Activated naive CD4-positive, alpha-beta T cell treated with anti-CD3 and anti-CD28 coated beads, Interleukin-2, amount 10 ng/mL, durations not matched to agents 7 days and 5 days (primary cell): ENCODE measurements at regions of chr1 and their contacts with region 1.

Region 1: GRCh38 chr1:169586395-169587255 is at the start of gene F5:
- DNase-seq: peak; percentile 86
- H3K4me3 Mint-ChIP-seq: peak within 1 kb of the TSS; percentile 84
- H3K27ac Mint-ChIP-seq: peak within 1 kb of the TSS; percentile 78
- H3K4me1 Mint-ChIP-seq: peaks cover 72% of the 10 kb centered on the region
- H3K27me3 Mint-ChIP-seq: no peaks in the 10 kb centered on the region

Region 2: GRCh38 chr1:168960595-168960994 is 626.0 kb before region 1 on chr1:
- CTCF ChIA-PET with region 1: no interaction called
- DNase-seq: no peak
- H3K4me3 Mint-ChIP-seq: no peak overlapping the region
- H3K27ac Mint-ChIP-seq: no peak overlapping the region
- H3K4me1 Mint-ChIP-seq: no peaks in the 10 kb centered on the region
- H3K27me3 Mint-ChIP-seq: no peaks in the 10 kb centered on the region

Region 3: DNA sequence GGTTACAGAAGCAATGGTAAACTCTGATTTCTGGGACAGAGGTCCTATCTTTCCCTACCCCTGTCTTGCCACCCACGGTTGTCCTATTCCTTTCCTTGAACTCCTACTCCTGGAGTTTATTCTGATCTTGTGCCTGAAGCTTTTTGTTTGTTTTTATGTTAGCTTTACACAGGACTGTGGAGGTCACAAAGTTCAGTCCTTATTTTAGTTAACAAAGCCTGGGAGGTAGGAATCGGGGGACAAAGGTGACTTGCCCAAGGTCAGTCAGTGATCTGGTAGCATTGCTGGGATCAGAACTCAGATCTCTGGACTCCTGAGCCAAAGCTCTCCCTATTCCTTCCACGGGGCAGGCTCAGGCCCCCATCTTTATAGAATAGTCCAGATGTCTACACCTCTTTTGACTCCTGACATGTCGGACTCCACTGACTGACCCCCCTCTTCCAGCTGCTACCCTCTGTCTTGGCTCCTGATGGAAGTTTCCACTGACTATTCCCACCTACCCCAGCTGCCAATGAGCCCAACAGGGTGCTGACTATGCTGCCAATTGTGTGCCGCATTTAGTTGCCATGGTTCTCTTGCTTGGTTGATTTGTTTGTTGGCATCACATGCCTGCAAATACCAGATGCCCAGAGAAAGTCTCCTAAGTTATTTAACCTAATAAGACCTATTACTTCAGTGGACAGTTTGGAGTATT is 10.2 kb before region 1 on chr1:
- CTCF ChIA-PET with region 1: interaction called, 14 read pairs
- DNase-seq: no peak
- H3K4me3 Mint-ChIP-seq: no peak overlapping the region
- H3K27ac Mint-ChIP-seq: no peak overlapping the region
- H3K4me1 Mint-ChIP-seq: peaks cover 4% of the 10 kb centered on the region
- H3K27me3 Mint-ChIP-seq: no peaks in the 10 kb centered on the region

Region 4: GRCh38 chr1:169694304-169695075 is 107.9 kb after region 1 on chr1:
- CTCF ChIA-PET with region 1: interaction called, 29 read pairs
- DNase-seq: peak; percentile 66
- H3K4me3 Mint-ChIP-seq: peak overlapping the region; percentile 39
- H3K27ac Mint-ChIP-seq: peak overlapping the region; percentile 95
- H3K4me1 Mint-ChIP-seq: peaks cover 98% of the 10 kb centered on the region
- H3K27me3 Mint-ChIP-seq: no peaks in the 10 kb centered on the region

Region 5: DNA sequence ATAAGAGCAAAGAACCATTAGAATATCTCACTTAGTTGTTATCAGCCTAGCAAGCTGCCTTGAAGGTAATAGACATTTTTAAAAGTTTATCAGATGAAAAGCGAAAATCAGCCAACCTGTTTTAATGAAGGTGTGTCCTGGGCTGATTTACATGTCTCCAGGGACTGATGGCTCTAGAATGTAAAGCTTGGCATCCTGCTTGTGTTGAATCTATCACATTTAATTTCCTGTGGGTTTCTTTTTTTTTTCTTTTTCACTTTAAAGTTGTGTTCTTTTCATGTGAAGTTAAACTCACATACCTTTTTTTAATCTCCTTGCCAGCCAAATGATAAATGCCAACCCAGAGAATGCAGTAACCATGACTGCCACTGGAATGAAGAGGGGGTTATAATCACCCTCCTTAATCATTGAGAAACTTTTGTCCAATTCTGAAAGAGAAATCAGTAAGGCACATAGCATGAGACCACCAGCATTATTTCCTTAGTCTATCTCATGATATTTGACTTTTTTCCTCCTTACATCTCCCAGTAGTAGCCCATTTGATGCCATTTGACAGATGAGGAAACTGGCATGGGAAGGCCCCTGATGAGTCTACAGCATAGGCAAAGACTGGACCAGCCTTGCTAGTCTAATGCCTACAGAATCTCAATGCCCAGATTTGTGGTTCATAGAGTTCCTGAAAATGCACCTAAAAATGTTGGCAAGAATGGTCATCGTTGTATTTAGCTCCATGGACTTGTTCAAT is 114.8 kb after region 1 on chr1:
- CTCF ChIA-PET with region 1: interaction called, 45 read pairs
- DNase-seq: no peak
- H3K4me3 Mint-ChIP-seq: peak overlapping the region; percentile 50
- H3K27ac Mint-ChIP-seq: peak overlapping the region; percentile 82
- H3K4me1 Mint-ChIP-seq: peaks cover 98% of the 10 kb centered on the region
- H3K27me3 Mint-ChIP-seq: no peaks in the 10 kb centered on the region

Region 6: GRCh38 chr1:169711469-169712281 is 125.0 kb after region 1 on chr1 and contains the start of gene SELL:
- CTCF ChIA-PET with region 1: interaction called, 45 read pairs
- DNase-seq: peak; percentile 86
- H3K4me3 Mint-ChIP-seq: peak within 1 kb of the TSS; percentile 88
- H3K27ac Mint-ChIP-seq: peak within 1 kb of the TSS; percentile 91
- H3K4me1 Mint-ChIP-seq: peaks cover 20% of the 10 kb centered on the region
- H3K27me3 Mint-ChIP-seq: peaks cover 11% of the 10 kb centered on the region

Region 7: DNA sequence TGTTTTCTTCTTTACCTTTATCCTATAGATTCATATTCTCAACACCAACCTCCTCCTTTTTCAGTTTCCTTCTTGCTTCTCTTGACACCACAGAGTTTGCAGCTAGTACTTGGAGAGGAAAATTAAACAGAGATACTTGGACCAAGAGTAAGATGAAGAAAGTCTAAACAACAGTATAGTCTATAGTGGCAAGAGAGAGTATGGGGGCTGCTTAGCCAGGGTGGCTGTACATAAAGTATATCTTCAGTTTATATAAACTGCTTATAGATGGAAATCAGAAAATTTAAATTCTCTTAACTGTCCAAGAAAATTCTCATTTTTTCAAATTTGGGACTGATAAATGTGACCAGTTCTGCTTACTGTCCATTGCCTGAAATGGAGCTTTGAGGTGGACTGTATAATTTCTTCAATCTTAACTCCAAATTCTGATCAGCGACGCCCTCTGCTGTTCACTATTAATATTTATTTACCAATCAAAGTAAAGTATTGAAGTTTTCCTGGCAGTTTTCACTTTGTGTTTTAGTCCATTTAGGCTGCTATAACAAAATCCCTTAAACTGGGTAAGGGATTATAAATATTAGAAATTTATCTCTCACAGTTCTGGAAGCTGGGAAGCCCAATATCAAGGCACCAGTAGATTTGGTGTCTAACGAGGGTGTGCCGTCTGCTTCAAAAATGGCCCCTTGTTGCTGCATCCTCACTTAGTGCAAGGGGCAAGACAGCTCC is 222.9 kb after region 1 on chr1:
- CTCF ChIA-PET with region 1: interaction called, 10 read pairs
- DNase-seq: no peak
- H3K4me3 Mint-ChIP-seq: no peak overlapping the region
- H3K27ac Mint-ChIP-seq: no peak overlapping the region
- H3K4me1 Mint-ChIP-seq: peaks cover 2% of the 10 kb centered on the region
- H3K27me3 Mint-ChIP-seq: no peaks in the 10 kb centered on the region